Activated CD8-positive, alpha-beta memory T cell treated with anti-CD3 and anti-CD28 coated beads, Interleukin-2, amount 10 ng/mL, durations not matched to agents 7 days and 5 days (primary cell): ENCODE measurements at regions of chr1 and their contacts with region 1.

Region 1: DNA sequence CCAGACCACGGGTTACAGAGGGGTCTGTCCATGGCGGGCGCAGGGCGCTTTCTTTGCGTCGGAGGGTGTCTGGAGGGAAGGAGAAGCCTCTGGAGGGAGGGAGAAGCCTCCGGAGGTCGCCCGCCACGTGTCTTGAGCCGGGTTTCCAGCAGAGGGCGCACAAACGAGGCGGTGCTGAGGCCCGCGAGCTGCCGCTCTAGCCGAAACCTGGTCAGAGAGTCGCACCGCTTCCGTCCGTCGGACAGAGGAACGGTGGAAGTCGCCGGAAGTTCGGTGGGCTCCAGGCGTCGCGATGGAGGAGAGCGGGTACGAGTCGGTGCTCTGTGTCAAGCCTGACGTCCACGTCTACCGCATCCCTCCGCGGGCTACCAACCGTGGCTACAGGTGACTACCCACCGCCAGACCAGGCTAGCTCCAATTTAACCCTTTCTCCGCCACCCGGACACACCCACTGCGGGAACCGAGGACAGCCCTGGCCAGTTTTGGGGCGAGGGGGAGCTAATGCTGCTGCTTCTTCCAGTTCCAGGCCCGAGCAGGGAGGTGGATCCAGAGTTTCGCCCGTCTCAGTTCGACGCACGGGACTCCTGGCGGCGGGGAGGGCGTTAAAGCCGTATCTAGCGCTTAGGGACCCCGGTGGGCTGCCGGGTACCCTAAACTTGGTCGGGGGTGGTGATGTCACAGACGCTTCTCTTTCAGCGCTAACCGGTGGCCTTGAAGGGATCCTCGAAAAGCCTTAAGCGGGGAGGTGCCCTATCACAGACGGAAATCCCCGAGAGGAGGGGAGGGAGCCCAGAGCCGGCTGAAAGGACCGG is at the start of gene NECAP2:
- DNase-seq: peak; percentile 96
- ATAC-seq: peak; percentile 91
- H3K4me3 Mint-ChIP-seq: peak within 1 kb of the TSS; percentile 85
- H3K27ac Mint-ChIP-seq: peak within 1 kb of the TSS; percentile 92
- H3K4me1 Mint-ChIP-seq: peaks cover 39% of the 10 kb centered on the region
- H3K27me3 Mint-ChIP-seq: no peaks in the 10 kb centered on the region
- total RNA-seq, gene NECAP2: 71.0 to 88.3 TPM

Region 2: GRCh38 chr1:16366722-16367257 is 73.9 kb before region 1 on chr1 and contains the start of gene SZRD1:
- CTCF ChIA-PET with region 1: interaction called, 16 read pairs
- DNase-seq: peak; percentile 98
- ATAC-seq: peak; percentile 89
- H3K4me3 Mint-ChIP-seq: peak within 1 kb of the TSS; percentile 99
- H3K27ac Mint-ChIP-seq: peak within 1 kb of the TSS; percentile 99
- H3K4me1 Mint-ChIP-seq: peaks cover 42% of the 10 kb centered on the region
- H3K27me3 Mint-ChIP-seq: no peaks in the 10 kb centered on the region
- total RNA-seq, gene SZRD1: 161 to 189 TPM

Region 3: DNA sequence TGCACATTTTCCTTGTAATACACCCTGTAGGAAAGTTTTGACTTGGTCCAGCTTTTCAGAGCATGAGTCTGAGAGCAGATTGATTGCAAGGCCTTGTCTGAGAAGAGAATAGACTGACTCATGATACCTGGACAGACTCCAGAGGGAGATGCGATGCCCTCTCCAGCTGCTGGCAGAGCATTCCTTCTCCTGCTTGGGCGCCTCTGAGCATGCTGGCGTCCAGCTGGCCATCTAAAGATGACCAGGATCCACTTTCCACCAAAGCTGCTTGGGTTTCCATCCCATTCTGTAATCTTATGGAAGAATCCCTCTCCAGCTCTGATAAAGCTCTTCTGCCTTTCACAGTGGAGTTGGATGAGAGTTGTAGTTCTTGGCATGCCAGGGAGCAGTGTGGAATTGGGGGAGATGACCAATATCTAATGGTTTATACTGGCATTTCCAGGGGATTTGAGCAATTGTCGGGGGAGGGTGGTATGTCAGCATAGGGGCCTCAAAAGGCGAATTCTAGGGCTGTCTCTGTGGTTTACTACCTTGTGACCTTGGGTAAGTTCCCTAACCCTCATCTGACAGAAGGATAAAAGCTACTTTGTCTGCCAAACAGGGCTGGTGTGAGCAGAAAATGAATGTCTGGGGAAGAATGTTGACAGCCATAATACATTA is 54.1 kb before region 1 on chr1:
- CTCF ChIA-PET with region 1: interaction called, 16 read pairs
- DNase-seq: no peak
- ATAC-seq: peak; percentile 45
- H3K4me3 Mint-ChIP-seq: peak overlapping the region; percentile 69
- H3K27ac Mint-ChIP-seq: peak overlapping the region; percentile 54
- H3K4me1 Mint-ChIP-seq: peaks cover 60% of the 10 kb centered on the region
- H3K27me3 Mint-ChIP-seq: no peaks in the 10 kb centered on the region

Region 4: GRCh38 chr1:16420424-16421118 is 20.1 kb before region 1 on chr1:
- CTCF ChIA-PET with region 1: interaction called, 19 read pairs
- DNase-seq: peak; percentile 86
- ATAC-seq: peak; percentile 98
- H3K4me3 Mint-ChIP-seq: peak overlapping the region; percentile 58
- H3K27ac Mint-ChIP-seq: peak overlapping the region; percentile 83
- H3K4me1 Mint-ChIP-seq: peaks cover 38% of the 10 kb centered on the region
- H3K27me3 Mint-ChIP-seq: peaks cover 15% of the 10 kb centered on the region